ENCODE measurements at regions of chr7 and their contacts with region 1.

Region 1: GRCh38 chr7:36962367-36962766 is 238.1 kb upstream of the AOAH start:
- DNase-seq: no peak
- ATAC-seq: no peak
- H3K4me3 Mint-ChIP-seq: no peak overlapping the region
- H3K27ac Mint-ChIP-seq: no peak overlapping the region
- H3K4me1 Mint-ChIP-seq: peaks cover 55% of the 10 kb centered on the region
- H3K27me3 Mint-ChIP-seq: no peaks in the 10 kb centered on the region

Region 2: GRCh38 chr7:36627836-36628235 is 334.5 kb before region 1 on chr7:
- CTCF ChIA-PET with region 1: no interaction called
- POLR2A ChIA-PET with region 1: no interaction called
- intact Hi-C with region 1: no loop called
- DNase-seq: no peak
- ATAC-seq: no peak
- H3K4me3 Mint-ChIP-seq: no peak overlapping the region
- H3K27ac Mint-ChIP-seq: no peak overlapping the region
- H3K4me1 Mint-ChIP-seq: peaks cover 2% of the 10 kb centered on the region
- H3K27me3 Mint-ChIP-seq: no peaks in the 10 kb centered on the region

Region 3: DNA sequence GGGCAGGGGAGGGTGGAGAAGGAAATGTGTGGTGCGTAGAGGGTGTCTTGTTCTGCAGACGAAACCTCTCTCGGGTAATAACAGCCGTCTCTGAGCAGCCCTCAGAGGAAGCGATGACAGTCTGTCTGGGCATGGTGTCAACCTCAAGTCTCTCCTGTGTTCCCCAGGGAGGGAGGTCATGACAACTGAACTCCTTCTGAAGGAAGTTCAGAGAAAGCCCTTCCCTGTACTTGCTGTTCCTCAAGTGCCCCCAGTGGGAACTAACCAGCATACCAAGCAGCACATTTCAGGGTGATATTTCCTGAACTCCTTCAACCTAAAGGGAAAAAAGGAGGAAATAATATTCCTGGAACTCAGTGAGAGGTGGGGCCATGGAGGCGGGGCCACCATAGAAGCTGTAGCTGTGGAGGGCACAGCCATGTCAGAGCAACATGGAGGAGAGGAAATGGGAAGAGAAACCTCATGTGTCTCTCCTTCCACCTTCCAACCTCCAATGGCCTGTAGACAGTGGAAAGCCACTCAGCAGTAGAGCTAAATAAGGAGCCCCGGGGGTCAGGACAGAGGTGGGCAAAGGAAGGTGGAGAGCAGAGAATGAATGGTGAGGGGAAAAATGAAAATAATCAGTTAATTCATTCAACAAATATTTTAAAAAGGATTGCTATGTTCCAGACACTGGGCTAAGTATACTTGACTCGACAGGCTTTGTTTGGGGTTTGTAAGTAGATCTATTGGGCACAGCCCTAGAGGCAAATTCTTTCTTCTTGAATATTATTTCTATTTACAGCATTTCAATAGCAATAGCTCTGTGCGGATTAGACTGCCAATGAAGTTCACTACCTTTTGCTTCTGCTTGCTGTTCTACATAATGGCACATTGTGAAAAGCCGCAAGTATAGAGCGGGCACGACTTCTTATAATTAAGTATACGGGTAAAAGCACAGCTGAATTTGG is 177.1 kb before region 1 on chr7:
- CTCF ChIA-PET with region 1: no interaction called
- POLR2A ChIA-PET with region 1: no interaction called
- intact Hi-C with region 1: loop called in 1 of 2 experiments (anchors 1 kb)
- DNase-seq: peak; percentile 67
- ATAC-seq: peak; percentile 83
- H3K4me3 Mint-ChIP-seq: no peak overlapping the region
- H3K27ac Mint-ChIP-seq: peak overlapping the region; percentile 56
- H3K4me1 Mint-ChIP-seq: peaks cover 78% of the 10 kb centered on the region
- H3K27me3 Mint-ChIP-seq: no peaks in the 10 kb centered on the region

Region 4: GRCh38 chr7:36852017-36852416 is 110.3 kb before region 1 on chr7:
- CTCF ChIA-PET with region 1: no interaction called
- POLR2A ChIA-PET with region 1: no interaction called
- intact Hi-C with region 1: loop called in 1 of 2 experiments (anchors 5 kb)
- DNase-seq: peak; percentile 52
- ATAC-seq: peak; percentile 87
- H3K4me3 Mint-ChIP-seq: no peak overlapping the region
- H3K27ac Mint-ChIP-seq: peak overlapping the region; percentile 82
- H3K4me1 Mint-ChIP-seq: peaks cover 22% of the 10 kb centered on the region
- H3K27me3 Mint-ChIP-seq: no peaks in the 10 kb centered on the region

Region 5: GRCh38 chr7:37031571-37032257 is 69.3 kb after region 1 on chr7:
- CTCF ChIA-PET with region 1: interaction called, 3 read pairs
- POLR2A ChIA-PET with region 1: no interaction called
- intact Hi-C with region 1: loop called in 1 of 2 experiments (anchors 5 kb)
- DNase-seq: peak; percentile 73
- ATAC-seq: peak; percentile 90
- H3K4me3 Mint-ChIP-seq: no peak overlapping the region
- H3K27ac Mint-ChIP-seq: peak overlapping the region; percentile 52
- H3K4me1 Mint-ChIP-seq: peaks cover 77% of the 10 kb centered on the region
- H3K27me3 Mint-ChIP-seq: no peaks in the 10 kb centered on the region

Region 6: GRCh38 chr7:37074370-37074769 is 112.0 kb after region 1 on chr7:
- CTCF ChIA-PET with region 1: no interaction called
- POLR2A ChIA-PET with region 1: no interaction called
- intact Hi-C with region 1: loop called in 1 of 2 experiments (anchors 5 kb)
- DNase-seq: no peak
- ATAC-seq: no peak
- H3K4me3 Mint-ChIP-seq: no peak overlapping the region
- H3K27ac Mint-ChIP-seq: no peak overlapping the region
- H3K4me1 Mint-ChIP-seq: peaks cover 46% of the 10 kb centered on the region
- H3K27me3 Mint-ChIP-seq: no peaks in the 10 kb centered on the region

Region 7: DNA sequence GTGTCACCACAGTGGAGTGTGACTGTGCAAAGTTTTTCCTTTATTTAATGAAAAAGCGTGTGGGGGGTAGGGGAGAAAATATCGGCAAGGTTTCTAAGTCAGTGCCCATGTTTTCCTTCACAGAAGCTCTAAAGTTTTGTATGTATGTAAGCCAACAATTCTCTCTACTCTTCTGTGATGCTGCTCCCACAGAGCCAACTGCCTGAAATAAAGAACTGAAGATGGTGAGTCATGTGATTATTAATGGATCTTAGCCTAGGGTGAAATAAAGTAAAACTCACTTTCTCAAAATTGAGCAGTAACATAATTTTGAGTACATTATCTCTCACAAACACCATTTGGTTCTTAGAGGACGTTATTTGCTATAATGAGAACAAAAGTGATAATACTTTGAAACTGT is 342.6 kb after region 1 on chr7:
- CTCF ChIA-PET with region 1: no interaction called
- POLR2A ChIA-PET with region 1: no interaction called
- intact Hi-C with region 1: no loop called
- DNase-seq: no peak
- ATAC-seq: no peak
- H3K4me3 Mint-ChIP-seq: no peak overlapping the region
- H3K27ac Mint-ChIP-seq: no peak overlapping the region
- H3K4me1 Mint-ChIP-seq: peaks cover 34% of the 10 kb centered on the region
- H3K27me3 Mint-ChIP-seq: no peaks in the 10 kb centered on the region

Measured in activated CD4-positive, alpha-beta T cell treated with anti-CD3 and anti-CD28 coated beads for 36 hours (primary cell).